Spleen (tissue), 13 donors: ENCODE measurements at regions of chr7 and their contacts with region 1.

Region 1: DNA sequence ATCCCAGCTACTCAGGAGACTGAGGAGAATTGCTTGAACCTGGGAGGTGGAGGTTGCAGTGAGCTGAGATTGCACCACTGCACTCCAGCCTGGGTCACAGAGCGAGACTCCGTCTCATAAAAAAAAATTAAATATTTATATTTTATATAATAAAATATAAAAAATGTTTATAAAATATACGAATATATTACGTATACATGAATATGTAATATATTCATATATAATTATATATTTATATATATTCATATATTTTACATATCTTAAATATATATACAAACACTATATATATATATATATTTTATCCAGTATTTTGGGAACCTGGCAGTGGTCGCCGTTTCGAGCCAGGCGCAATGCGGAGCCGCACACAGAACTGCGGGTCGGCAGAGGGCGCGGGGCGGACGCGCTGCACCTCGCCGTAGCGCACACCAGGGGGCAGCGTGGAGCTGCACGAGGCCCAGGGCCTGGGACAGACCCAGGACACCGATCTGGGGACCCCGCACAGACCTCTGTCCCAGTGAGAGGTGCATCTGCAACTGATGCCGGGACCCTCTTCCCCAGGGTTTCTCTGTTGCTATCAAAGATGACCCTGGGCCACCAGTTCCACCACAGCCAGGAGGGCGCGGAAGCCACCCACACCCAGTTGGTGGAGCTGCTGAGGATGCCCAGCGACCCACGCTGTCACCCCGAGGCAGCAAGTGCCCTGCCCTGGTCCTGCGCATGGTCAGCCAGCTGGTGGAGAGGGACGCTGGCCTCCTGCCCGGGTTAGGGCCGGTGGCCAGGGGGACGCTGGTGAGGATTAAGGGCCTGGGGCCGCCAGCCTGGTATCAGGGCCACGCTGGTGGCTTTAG is 22.7 kb downstream of the AP5Z1 start:
- DNase-seq: peak; percentile 90
- H3K4me3 ChIP-seq: no peak overlapping the region
- H3K27ac ChIP-seq: no peak overlapping the region
- H3K4me1 ChIP-seq: peaks cover 0 to 16% (median 5%) of the 10 kb centered on the region in 6 donors
- H3K27me3 ChIP-seq: no peaks in the 10 kb centered on the region
- CTCF ChIP-seq: peak; percentile 27 to 96 (median 85)
- POLR2A ChIP-seq: no peak

Region 2: DNA sequence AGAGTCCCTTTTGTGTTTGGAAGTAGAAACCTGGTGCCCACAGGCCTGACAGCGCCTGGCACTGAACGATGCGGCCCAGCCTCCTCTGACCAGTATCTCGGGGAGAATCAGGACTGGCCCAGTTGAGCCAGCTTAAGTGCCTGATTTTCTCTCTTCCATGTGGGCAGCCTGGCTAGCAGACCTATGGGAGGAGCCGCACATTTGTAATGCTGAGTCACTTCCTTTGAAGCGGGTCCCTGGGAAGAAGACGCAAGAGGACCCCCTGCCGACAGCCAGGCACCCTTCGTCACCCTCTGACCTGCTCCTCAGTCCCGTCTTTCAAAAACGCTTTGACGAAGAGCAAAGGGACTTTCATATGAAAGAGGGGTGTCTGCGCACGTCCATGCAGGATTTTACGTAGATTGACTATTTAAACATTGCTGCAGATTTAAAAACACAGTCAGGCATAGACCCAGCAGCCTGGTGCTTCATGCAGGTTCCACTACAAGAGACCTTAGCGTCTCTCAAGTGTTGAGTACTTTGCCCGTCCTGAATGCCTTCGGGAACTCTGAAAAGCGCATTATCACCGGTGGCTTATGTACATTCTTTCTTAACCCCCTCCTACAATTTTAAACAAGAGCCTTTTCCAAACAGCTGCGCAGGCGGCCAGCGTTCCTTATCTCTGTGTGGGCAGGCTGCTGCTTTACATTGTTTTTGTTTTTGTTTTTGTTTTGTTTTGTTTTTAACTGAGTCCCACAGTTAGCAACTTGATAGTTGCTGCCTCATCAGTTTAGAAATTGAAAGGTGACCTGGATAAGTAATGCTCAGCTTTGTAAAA is 59.2 kb before region 1 on chr7:
- intact Hi-C with region 1: loop called (anchors 10 kb)
- DNase-seq: no peak
- H3K4me3 ChIP-seq: peak overlapping the region in 4 of 8 donors; percentile 4 to 50 (median 20)
- H3K27ac ChIP-seq: peak overlapping the region in 7 of 8 donors; percentile 51 to 78 (median 65)
- H3K4me1 ChIP-seq: peaks cover 13 to 71% (median 31%) of the 10 kb centered on the region in 6 donors
- H3K27me3 ChIP-seq: no peaks in the 10 kb centered on the region
- CTCF ChIP-seq: no peak
- POLR2A ChIP-seq: no peak

Region 3: DNA sequence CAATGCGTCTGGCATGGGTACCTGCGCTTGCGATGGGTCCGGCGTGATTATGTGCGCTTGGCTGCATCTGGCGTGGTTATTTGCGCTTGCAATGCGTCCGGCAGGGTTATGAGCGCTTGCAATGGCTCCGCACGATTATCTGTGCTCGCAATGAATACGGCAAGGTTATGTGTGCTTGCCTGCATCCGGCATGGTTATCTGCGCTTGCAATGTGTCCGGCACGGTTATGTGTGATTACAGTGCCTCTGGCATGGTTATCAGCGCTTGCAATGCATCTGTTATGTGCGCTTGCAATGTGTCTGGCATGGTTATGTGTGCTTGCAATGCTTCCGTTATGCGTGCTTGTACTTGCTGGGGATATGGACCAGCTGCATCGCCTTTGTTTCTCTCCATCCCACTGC is 285.2 kb after region 1 on chr7:
- intact Hi-C with region 1: loop called (anchors 10 kb)
- DNase-seq: no peak
- H3K4me3 ChIP-seq: no peak overlapping the region
- H3K27ac ChIP-seq: no peak overlapping the region
- H3K4me1 ChIP-seq: peaks cover 0 to 6% (median 5%) of the 10 kb centered on the region in 6 donors
- H3K27me3 ChIP-seq: peaks cover 0 to 45% (median 10%) of the 10 kb centered on the region in 7 donors
- CTCF ChIP-seq: no peak
- POLR2A ChIP-seq: no peak